Activated CD8-positive, alpha-beta T cell treated with anti-CD3 and anti-CD28 coated beads for 36 hours (primary cell): ENCODE measurements at regions of chr11 and their contacts with region 1.

Region 1: DNA sequence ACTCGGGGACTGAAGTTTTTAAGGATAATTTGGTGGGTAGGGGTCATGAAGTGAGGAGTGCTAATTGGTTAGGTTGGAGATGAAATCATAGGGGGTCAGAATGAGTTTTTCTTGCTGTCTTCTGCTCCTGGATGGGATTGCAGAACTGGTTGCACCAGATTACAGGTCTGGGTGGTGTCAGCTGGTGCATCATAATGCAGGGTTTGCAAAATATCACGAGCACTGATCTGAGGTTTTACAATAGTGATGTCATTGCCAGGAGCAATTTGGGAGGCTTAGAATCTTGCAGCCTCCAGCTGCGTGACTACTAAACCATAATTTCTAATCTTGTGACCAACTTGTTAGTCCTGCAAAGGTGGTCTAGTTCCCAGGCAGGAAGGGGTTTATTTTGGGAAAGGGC is 46.4 kb upstream of the CALCB start:
- DNase-seq: no peak
- ATAC-seq: no peak
- H3K4me3 Mint-ChIP-seq: no peak overlapping the region
- H3K27ac Mint-ChIP-seq: no peak overlapping the region
- H3K4me1 Mint-ChIP-seq: peaks cover 2% of the 10 kb centered on the region
- H3K27me3 Mint-ChIP-seq: peaks cover 5% of the 10 kb centered on the region
- CTCF ChIP-seq: no peak

Region 2: GRCh38 chr11:15146271-15147003 is 119.4 kb after region 1 on chr11:
- CTCF ChIA-PET with region 1: no interaction called
- POLR2A ChIA-PET with region 1: no interaction called
- intact Hi-C with region 1: no loop called
- DNase-seq: no peak
- ATAC-seq: no peak
- H3K4me3 Mint-ChIP-seq: no peak overlapping the region
- H3K27ac Mint-ChIP-seq: no peak overlapping the region
- H3K4me1 Mint-ChIP-seq: peaks cover 8% of the 10 kb centered on the region
- H3K27me3 Mint-ChIP-seq: peaks cover 2% of the 10 kb centered on the region
- CTCF ChIP-seq: no peak

Region 3: DNA sequence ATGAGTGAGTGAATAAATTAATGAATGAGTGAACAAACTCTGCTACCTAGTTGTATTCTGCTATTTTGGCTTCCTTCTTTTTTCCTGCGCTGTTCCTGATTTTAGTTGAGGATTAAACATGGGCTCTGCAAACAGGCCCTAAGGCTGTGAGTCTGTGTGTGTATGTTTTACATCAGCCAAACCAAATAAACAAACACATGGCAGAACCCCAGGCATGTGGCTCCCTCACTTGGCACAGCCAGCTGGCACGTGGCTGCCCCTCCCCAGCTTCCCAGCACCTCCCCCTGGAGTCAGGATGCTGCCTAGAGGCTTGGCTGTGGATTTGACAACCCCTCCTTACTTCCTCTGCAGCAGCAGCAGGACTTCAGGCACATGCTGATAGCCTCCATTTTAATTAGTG is 681.0 kb after region 1 on chr11:
- CTCF ChIA-PET with region 1: no interaction called
- POLR2A ChIA-PET with region 1: no interaction called
- intact Hi-C with region 1: loop called (anchors 10 kb)
- DNase-seq: no peak
- ATAC-seq: no peak
- H3K4me3 Mint-ChIP-seq: no peak overlapping the region
- H3K27ac Mint-ChIP-seq: no peak overlapping the region
- H3K4me1 Mint-ChIP-seq: no peaks in the 10 kb centered on the region
- H3K27me3 Mint-ChIP-seq: peaks cover 1% of the 10 kb centered on the region
- CTCF ChIP-seq: no peak